MCF 10A (cell line): ENCODE measurements at regions of chr2 and their contacts with region 1.

Region 1: GRCh38 chr2:121588357-121588756 is 57.7 kb downstream of the RNU4ATAC start:
- DNase-seq: no peak
- H3K4me3 Mint-ChIP-seq: no peak overlapping the region
- H3K27ac Mint-ChIP-seq: peak overlapping the region; percentile 97
- H3K4me1 Mint-ChIP-seq: peaks cover 9% of the 10 kb centered on the region
- H3K27me3 Mint-ChIP-seq: no peaks in the 10 kb centered on the region
- CTCF ChIP-seq: no peak

Region 2: GRCh38 chr2:121505005-121505404 is 83.4 kb before region 1 on chr2:
- CTCF ChIA-PET with region 1: no interaction called
- POLR2A ChIA-PET with region 1: no interaction called
- intact Hi-C with region 1: no loop called
- DNase-seq: peak; percentile 86
- H3K4me3 Mint-ChIP-seq: peak overlapping the region; percentile 62
- H3K27ac Mint-ChIP-seq: peak overlapping the region; percentile 72
- H3K4me1 Mint-ChIP-seq: peaks cover 61% of the 10 kb centered on the region
- H3K27me3 Mint-ChIP-seq: no peaks in the 10 kb centered on the region
- CTCF ChIP-seq: no peak

Region 3: DNA sequence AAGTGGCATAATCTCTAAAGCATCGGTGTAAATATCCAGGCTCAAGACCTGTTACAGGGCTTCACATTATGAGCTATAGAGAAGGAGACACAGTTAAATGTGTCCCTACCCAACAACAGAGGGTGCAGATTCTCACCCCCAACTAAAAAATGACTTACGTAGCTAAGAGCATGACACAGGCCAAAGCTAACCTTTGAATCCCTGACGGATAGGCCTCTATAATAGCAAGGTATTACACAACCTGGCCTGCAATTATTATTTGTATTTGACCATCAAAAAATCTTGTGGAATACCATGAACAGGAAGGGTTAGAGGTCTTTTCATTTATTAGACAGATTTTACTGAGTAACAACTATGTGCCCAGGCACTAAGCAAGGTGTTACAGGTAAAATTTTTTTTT is 12.6 kb before region 1 on chr2:
- CTCF ChIA-PET with region 1: interaction called, 3 read pairs
- POLR2A ChIA-PET with region 1: interaction called, 14 read pairs
- intact Hi-C with region 1: no loop called
- DNase-seq: no peak
- H3K4me3 Mint-ChIP-seq: no peak overlapping the region
- H3K27ac Mint-ChIP-seq: no peak overlapping the region
- H3K4me1 Mint-ChIP-seq: peaks cover 23% of the 10 kb centered on the region
- H3K27me3 Mint-ChIP-seq: no peaks in the 10 kb centered on the region
- CTCF ChIP-seq: no peak